ENCODE measurements at regions of chr19 and their contacts with region 1.

Region 1: GRCh38 chr19:9140159-9140874 is at the start of gene ZNF317:
- DNase-seq: peak; percentile 87 to 91
- ATAC-seq: peak; percentile 99
- H3K4me3 ChIP-seq: peak within 1 kb of the TSS; percentile 84 to 88 (median 87)
- H3K27ac ChIP-seq: peak within 1 kb of the TSS; percentile 90 to 93 (median 92)
- H3K4me1 ChIP-seq: peaks cover 16 to 23% of the 10 kb centered on the region in 2 donors
- H3K27me3 ChIP-seq: no peaks in the 10 kb centered on the region
- CTCF ChIP-seq: no peak
- POLR2A ChIP-seq: peak; percentile 28 to 70
- total RNA-seq, gene ZNF317: 9.1 to 15.0 (median 12.2) TPM

Region 2: GRCh38 chr19:9309139-9309973 is 169.0 kb after region 1 on chr19 and contains the start of gene ZNF699:
- in situ Hi-C with region 1: no loop called
- intact Hi-C with region 1: loop called (anchors 2 kb)
- DNase-seq: peak; percentile 93 to 95
- ATAC-seq: peak; percentile 99 to 100
- H3K4me3 ChIP-seq: peak within 1 kb of the TSS; percentile 79 to 100 (median 83)
- H3K27ac ChIP-seq: peak within 1 kb of the TSS; percentile 77 to 94 (median 85)
- H3K4me1 ChIP-seq: peaks cover 0 to 11% of the 10 kb centered on the region in 2 donors
- H3K27me3 ChIP-seq: no peaks in the 10 kb centered on the region
- CTCF ChIP-seq: no peak
- POLR2A ChIP-seq: peak; percentile 44 to 49
- total RNA-seq, gene ZNF699: 0.87 to 4.1 (median 1.8) TPM

Region 3: GRCh38 chr19:9323919-9324583 is 183.7 kb after region 1 on chr19 and contains the start of gene ZNF559:
- in situ Hi-C with region 1: no loop called
- intact Hi-C with region 1: loop called (anchors 1 kb)
- DNase-seq: peak; percentile 60 to 78
- ATAC-seq: peak; percentile 76 to 95
- H3K4me3 ChIP-seq: peak within 1 kb of the TSS; percentile 64 to 80 (median 70)
- H3K27ac ChIP-seq: peak within 1 kb of the TSS; percentile 72 to 79 (median 78)
- H3K4me1 ChIP-seq: peaks cover 0 to 6% of the 10 kb centered on the region in 2 donors
- H3K27me3 ChIP-seq: no peaks in the 10 kb centered on the region
- CTCF ChIP-seq: peak in 2 of 5 experiments; percentile 21 to 26
- POLR2A ChIP-seq: no peak
- total RNA-seq, gene ZNF559: 1.4 to 3.8 (median 3.0) TPM

Region 4: DNA sequence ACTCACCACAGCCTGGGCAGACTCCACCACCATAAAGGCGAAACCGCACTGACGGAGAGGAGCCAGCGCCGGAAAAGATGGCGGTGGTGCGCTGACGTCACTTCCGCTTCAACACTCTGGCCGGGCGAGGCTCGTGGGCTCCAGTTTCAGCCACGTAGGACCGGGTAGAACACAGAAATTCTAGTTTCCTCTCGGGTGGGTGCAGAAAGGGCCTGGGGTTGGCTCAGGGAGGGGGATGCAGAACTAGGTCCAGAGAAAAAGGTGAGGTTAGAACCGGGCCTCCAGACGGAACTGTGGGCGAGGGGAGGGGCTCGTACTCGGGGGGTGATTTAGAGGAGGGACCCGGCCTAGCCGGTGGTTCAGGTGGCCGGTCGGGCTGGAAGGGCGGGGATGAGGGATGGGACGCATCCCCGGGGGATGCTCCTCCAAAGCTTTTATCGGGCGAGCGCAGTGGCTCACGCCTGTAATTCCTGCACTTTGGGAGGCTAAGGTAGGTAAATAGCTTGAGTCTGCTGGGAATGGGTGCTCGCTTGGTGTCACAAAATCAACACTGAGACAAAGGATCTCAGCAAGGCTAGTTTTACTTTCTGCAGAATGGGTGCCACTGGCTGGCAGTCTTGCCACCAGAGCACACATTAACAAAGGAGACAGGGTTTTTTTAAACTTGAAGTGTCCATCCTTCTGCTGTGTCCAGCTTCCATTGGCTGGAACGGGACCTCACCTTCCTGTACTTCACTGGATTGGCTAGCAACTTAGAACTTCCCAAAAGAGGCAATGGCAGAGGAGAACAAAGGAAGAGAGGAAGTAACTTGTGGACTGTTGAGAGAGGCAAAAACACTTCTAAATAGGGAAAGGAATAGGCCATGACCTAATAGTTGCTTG is 481.1 kb after region 1 on chr19 and contains the start of gene ZNF561:
- in situ Hi-C with region 1: no loop called
- intact Hi-C with region 1: loop called (anchors 10 kb)
- DNase-seq: peak; percentile 70
- ATAC-seq: peak; percentile 96 to 98
- H3K4me3 ChIP-seq: peak within 1 kb of the TSS; percentile 70 to 96 (median 86)
- H3K27ac ChIP-seq: peak within 1 kb of the TSS; percentile 82 to 92 (median 90)
- H3K4me1 ChIP-seq: peaks cover 14 to 22% of the 10 kb centered on the region in 2 donors
- H3K27me3 ChIP-seq: no peaks in the 10 kb centered on the region
- CTCF ChIP-seq: no peak
- POLR2A ChIP-seq: no peak
- total RNA-seq, gene ZNF561: 8.7 to 17.5 (median 14.4) TPM

Region 5: GRCh38 chr19:9834726-9835506 is 694.6 kb after region 1 on chr19 and contains the start of gene PIN1:
- in situ Hi-C with region 1: no loop called
- intact Hi-C with region 1: loop called (anchors 1 kb)
- DNase-seq: peak; percentile 98 to 99
- ATAC-seq: peak; percentile 98 to 99
- H3K4me3 ChIP-seq: peak within 1 kb of the TSS; percentile 74 to 99 (median 94)
- H3K27ac ChIP-seq: peak within 1 kb of the TSS; percentile 78 to 90 (median 87)
- H3K4me1 ChIP-seq: peaks cover 12 to 18% of the 10 kb centered on the region in 2 donors
- H3K27me3 ChIP-seq: no peaks in the 10 kb centered on the region
- CTCF ChIP-seq: peak; percentile 36 to 74 (median 43)
- POLR2A ChIP-seq: peak; percentile 24 to 52
- total RNA-seq, gene PIN1: 83.9 to 111 (median 93.4) TPM

Measured in gastrocnemius medialis (tissue), 4 donors.